ENCODE measurements at regions of chr12 and their contacts with region 1.

Region 1: DNA sequence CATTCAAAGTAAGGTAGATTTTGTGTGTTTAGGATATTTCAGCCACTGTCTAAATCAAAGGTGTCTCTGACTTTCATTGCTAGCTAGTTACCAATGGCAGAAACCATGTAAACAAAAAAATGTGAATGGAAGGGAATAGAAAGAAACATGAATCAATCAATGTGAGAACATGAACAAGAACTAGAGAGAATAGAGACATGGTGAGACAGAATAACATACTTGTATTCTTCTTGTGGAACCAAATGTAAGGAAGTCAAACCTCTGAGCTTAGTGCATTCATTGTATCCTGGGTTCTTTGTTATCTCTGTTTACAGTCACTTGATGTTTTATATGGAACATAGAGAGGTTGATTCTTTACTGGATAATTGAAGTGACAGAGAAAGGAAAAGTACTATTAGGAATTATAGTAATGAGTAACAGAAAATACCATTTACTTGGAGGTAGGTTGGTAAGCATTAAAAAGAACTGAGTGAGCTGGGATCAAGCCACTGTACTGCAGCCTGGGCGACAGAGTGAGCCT is 2.6 kb upstream of the WNK1 start:
- DNase-seq: no peak
- ATAC-seq: no peak
- H3K4me3 ChIP-seq: no peak overlapping the region
- H3K27ac ChIP-seq: no peak overlapping the region
- H3K4me1 ChIP-seq: peaks cover 15% of the 10 kb centered on the region
- H3K27me3 ChIP-seq: no peaks in the 10 kb centered on the region
- CTCF ChIP-seq: no peak
- POLR2A ChIP-seq: no peak

Region 2: GRCh38 chr12:583234-583869 is 166.5 kb before region 1 on chr12:
- intact Hi-C with region 1: loop called (anchors 10 kb)
- DNase-seq: peak in 1 of 4 donors; percentile 46
- ATAC-seq: peak; percentile 18
- H3K4me3 ChIP-seq: no peak overlapping the region
- H3K27ac ChIP-seq: no peak overlapping the region
- H3K4me1 ChIP-seq: peaks cover 11% of the 10 kb centered on the region
- H3K27me3 ChIP-seq: no peaks in the 10 kb centered on the region
- CTCF ChIP-seq: no peak
- POLR2A ChIP-seq: no peak